Panc1 (cell line): ENCODE measurements at regions of chr6 and their contacts with region 1.

Region 1: GRCh38 chr6:44475779-44476434 is 88.4 kb downstream of the CDC5L start:
- DNase-seq: no peak
- ATAC-seq: peak; percentile 94
- H3K4me3 ChIP-seq: no peak overlapping the region
- H3K27ac ChIP-seq: no peak overlapping the region
- H3K4me1 ChIP-seq: no peaks in the 10 kb centered on the region
- H3K27me3 ChIP-seq: no peaks in the 10 kb centered on the region
- CTCF ChIP-seq: peak; percentile 96

Region 2: DNA sequence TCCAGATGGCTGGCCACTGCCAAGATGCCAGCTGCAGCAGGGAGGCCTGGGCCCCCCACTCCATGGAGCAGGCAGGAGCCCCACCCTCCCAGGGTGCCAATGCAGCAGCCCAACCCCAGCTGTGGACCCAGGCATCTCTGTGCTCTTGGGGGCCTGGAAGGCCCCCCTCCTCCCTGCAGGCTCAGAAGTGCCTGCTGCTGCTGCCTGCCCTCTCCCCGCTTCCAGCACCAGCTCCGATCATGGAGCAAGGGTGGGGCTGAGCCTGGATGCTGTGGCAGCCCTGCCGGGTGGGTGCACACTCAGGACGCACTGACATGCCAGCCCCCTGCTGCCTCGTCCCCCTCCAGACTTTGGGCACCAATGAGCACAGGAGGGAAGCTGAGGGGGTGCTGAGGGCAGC is 1063.4 kb before region 1 on chr6:
- CTCF ChIA-PET with region 1: no interaction called
- POLR2A ChIA-PET with region 1: no interaction called
- in situ Hi-C with region 1: no loop called
- intact Hi-C with region 1: loop called (anchors 5 kb)
- DNase-seq: no peak
- ATAC-seq: no peak
- H3K4me3 ChIP-seq: no peak overlapping the region
- H3K27ac ChIP-seq: no peak overlapping the region
- H3K4me1 ChIP-seq: no peaks in the 10 kb centered on the region
- H3K27me3 ChIP-seq: no peaks in the 10 kb centered on the region
- CTCF ChIP-seq: no peak

Region 3: DNA sequence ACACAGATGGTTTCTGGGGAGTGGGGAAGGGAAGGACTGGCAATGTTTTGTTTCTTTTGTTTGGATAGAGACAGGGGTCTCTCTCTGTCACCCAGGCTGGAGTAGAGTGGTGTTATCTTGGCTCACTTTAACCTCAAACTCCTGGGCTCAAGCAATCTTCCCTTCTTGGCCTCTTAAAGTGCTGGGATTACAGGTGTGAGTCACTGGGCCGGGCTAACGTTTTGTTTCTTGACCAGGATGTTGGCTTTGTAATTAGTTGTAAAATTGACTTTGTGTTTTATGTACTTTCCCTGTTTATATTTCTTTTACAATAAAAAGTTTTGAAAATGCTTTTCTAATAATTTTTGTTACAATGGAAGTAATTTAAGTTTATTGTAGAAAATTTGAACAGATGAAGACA is 122.6 kb before region 1 on chr6:
- CTCF ChIA-PET with region 1: no interaction called
- POLR2A ChIA-PET with region 1: no interaction called
- in situ Hi-C with region 1: no loop called
- intact Hi-C with region 1: no loop called
- DNase-seq: no peak
- ATAC-seq: no peak
- H3K4me3 ChIP-seq: no peak overlapping the region
- H3K27ac ChIP-seq: no peak overlapping the region
- H3K4me1 ChIP-seq: no peaks in the 10 kb centered on the region
- H3K27me3 ChIP-seq: peaks cover 3% of the 10 kb centered on the region; the same call in 1 of the 2 replicates
- CTCF ChIP-seq: no peak

Region 4: GRCh38 chr6:44494011-44494501 is 18.1 kb after region 1 on chr6:
- CTCF ChIA-PET with region 1: interaction called, 10 read pairs
- POLR2A ChIA-PET with region 1: no interaction called
- in situ Hi-C with region 1: no loop called
- intact Hi-C with region 1: no loop called
- DNase-seq: peak; percentile 32
- ATAC-seq: peak; percentile 57
- H3K4me3 ChIP-seq: no peak overlapping the region
- H3K27ac ChIP-seq: no peak overlapping the region
- H3K4me1 ChIP-seq: peaks cover 13% of the 10 kb centered on the region
- H3K27me3 ChIP-seq: no peaks in the 10 kb centered on the region
- CTCF ChIP-seq: peak; percentile 74

Region 5: GRCh38 chr6:44630125-44631028 is 154.5 kb after region 1 on chr6:
- CTCF ChIA-PET with region 1: interaction called, 10 read pairs
- POLR2A ChIA-PET with region 1: no interaction called
- in situ Hi-C with region 1: no loop called
- intact Hi-C with region 1: no loop called
- DNase-seq: no peak
- ATAC-seq: peak; percentile 84
- H3K4me3 ChIP-seq: no peak overlapping the region
- H3K27ac ChIP-seq: no peak overlapping the region
- H3K4me1 ChIP-seq: no peaks in the 10 kb centered on the region; the same call in 1 of the 2 replicates
- H3K27me3 ChIP-seq: peaks cover 2% of the 10 kb centered on the region; the same call in 1 of the 2 replicates
- CTCF ChIP-seq: peak; percentile 81

Region 6: GRCh38 chr6:44642870-44643529 is 167.1 kb after region 1 on chr6:
- CTCF ChIA-PET with region 1: interaction called, 3 read pairs
- POLR2A ChIA-PET with region 1: no interaction called
- in situ Hi-C with region 1: no loop called
- intact Hi-C with region 1: loop called (anchors 5 kb)
- DNase-seq: no peak
- ATAC-seq: no peak
- H3K4me3 ChIP-seq: no peak overlapping the region
- H3K27ac ChIP-seq: no peak overlapping the region
- H3K4me1 ChIP-seq: no peaks in the 10 kb centered on the region
- H3K27me3 ChIP-seq: no peaks in the 10 kb centered on the region
- CTCF ChIP-seq: no peak

Region 7: DNA sequence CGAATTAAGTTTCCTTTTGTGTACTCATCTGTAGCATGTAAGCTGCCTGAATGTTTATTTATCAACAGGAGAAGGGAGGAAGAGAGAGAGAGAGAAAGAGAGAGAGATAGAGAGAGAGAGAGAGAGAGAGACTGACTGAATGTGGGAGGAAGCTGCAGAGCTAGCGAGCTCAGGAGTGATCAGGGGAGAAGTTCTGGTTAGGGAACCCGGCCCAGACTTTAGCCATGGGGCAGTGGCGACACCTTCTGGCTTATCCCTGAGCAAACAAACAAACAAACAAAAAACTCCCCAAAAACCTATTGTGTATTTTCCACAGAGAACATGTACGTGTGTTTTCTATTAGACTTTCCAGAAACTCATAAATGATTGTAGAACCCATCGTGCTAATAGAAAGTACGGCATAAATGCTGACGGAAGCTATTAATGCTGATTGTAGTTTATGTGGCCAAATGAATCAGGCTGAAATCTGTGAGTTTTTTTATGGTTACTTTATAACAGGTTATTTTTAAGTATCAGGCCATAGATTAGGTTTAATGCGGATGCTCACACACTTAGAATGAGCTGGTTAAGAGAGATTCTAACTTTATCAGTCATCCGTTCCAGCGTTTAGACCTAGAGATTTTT is 1446.9 kb after region 1 on chr6:
- CTCF ChIA-PET with region 1: interaction called, 3 read pairs
- POLR2A ChIA-PET with region 1: no interaction called
- in situ Hi-C with region 1: no loop called
- intact Hi-C with region 1: loop called (anchors 10 kb)
- DNase-seq: peak; percentile 56
- ATAC-seq: peak; percentile 94
- H3K4me3 ChIP-seq: no peak overlapping the region
- H3K27ac ChIP-seq: no peak overlapping the region
- H3K4me1 ChIP-seq: no peaks in the 10 kb centered on the region
- H3K27me3 ChIP-seq: peaks cover 2% of the 10 kb centered on the region; the same call in 1 of the 2 replicates
- CTCF ChIP-seq: peak; percentile 89